A549 (cell line): ENCODE measurements at regions of chr17 and their contacts with region 1.

Region 1: GRCh38 chr17:32319548-32319905 is 22.4 kb downstream of the C17orf75 start:
- DNase-seq: peak; percentile 69 to 88
- ATAC-seq: peak; percentile 89 to 96
- H3K4me3 ChIP-seq: no peak overlapping the region
- H3K27ac ChIP-seq: no peak overlapping the region
- H3K4me1 ChIP-seq: no peaks in the 10 kb centered on the region
- CTCF ChIP-seq: peak; percentile 94
- EP300 ChIP-seq: no peak
- POLR2A ChIP-seq: no peak
- RAD21 ChIP-seq: peak; percentile 97 to 98

Region 2: DNA sequence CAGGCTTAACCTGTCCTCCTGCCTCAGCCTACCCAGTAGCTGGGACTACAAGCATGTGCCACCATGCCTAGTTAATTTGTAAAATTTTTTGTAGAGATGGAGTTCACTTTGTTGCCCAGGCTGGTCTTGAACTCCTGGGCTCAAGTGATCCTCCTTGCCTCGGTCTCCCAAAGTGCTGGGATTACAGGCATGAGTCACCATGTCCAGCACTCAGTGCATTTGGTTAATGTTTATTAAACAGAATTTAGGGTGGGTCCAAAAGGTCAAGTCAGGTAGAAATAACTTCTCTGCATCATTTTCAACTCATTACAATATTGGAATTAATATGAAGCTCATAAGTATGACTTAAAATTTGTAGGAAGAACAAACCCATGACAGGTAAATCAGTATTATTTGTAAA is 121.5 kb before region 1 on chr17:
- CTCF ChIA-PET with region 1: interaction called, 51 read pairs
- POLR2A ChIA-PET with region 1: no interaction called
- DNase-seq: no peak
- ATAC-seq: no peak
- H3K4me3 ChIP-seq: no peak overlapping the region
- H3K27ac ChIP-seq: peak overlapping the region in 1 of 2 experiments; percentile 28; a peak in 1 of 6 replicates
- H3K4me1 ChIP-seq: peaks cover 17% of the 10 kb centered on the region
- CTCF ChIP-seq: no peak
- EP300 ChIP-seq: no peak
- POLR2A ChIP-seq: no peak
- RAD21 ChIP-seq: no peak

Region 3: DNA sequence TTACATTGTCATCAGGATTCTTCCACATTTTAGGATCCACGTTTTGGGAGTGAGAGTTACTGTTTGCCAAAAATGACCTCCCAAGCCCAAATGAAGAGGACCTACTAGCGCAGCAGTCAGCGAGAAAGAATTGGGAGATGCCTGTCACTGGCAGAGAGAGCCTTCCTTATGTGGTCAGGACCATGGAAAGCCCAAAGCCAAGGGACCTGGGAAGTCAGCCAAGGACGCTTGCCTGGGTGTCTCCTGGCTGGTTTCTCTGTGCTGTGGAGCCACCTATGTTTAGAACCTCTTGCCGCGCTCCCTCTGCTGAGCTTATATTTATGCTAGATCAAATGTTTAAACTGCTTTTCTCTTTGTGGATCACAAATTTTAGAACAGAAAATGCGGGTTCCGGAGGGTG is 78.8 kb before region 1 on chr17:
- CTCF ChIA-PET with region 1: interaction called, 13 read pairs
- POLR2A ChIA-PET with region 1: no interaction called
- DNase-seq: no peak
- ATAC-seq: peak in 1 of 2 experiments; percentile 51; a peak in 2 of 6 replicates
- H3K4me3 ChIP-seq: no peak overlapping the region
- H3K27ac ChIP-seq: no peak overlapping the region
- H3K4me1 ChIP-seq: no peaks in the 10 kb centered on the region
- CTCF ChIP-seq: no peak
- EP300 ChIP-seq: no peak
- POLR2A ChIP-seq: no peak
- RAD21 ChIP-seq: no peak

Region 4: GRCh38 chr17:32271844-32272243 is 47.7 kb before region 1 on chr17:
- CTCF ChIA-PET with region 1: interaction called, 13 read pairs
- POLR2A ChIA-PET with region 1: no interaction called
- DNase-seq: no peak
- ATAC-seq: no peak
- H3K4me3 ChIP-seq: no peak overlapping the region
- H3K27ac ChIP-seq: peak overlapping the region in 1 of 2 experiments; percentile 54; a peak in 3 of 6 replicates
- H3K4me1 ChIP-seq: peaks cover 69% of the 10 kb centered on the region
- CTCF ChIP-seq: no peak
- EP300 ChIP-seq: no peak
- POLR2A ChIP-seq: no peak
- RAD21 ChIP-seq: no peak

Region 5: DNA sequence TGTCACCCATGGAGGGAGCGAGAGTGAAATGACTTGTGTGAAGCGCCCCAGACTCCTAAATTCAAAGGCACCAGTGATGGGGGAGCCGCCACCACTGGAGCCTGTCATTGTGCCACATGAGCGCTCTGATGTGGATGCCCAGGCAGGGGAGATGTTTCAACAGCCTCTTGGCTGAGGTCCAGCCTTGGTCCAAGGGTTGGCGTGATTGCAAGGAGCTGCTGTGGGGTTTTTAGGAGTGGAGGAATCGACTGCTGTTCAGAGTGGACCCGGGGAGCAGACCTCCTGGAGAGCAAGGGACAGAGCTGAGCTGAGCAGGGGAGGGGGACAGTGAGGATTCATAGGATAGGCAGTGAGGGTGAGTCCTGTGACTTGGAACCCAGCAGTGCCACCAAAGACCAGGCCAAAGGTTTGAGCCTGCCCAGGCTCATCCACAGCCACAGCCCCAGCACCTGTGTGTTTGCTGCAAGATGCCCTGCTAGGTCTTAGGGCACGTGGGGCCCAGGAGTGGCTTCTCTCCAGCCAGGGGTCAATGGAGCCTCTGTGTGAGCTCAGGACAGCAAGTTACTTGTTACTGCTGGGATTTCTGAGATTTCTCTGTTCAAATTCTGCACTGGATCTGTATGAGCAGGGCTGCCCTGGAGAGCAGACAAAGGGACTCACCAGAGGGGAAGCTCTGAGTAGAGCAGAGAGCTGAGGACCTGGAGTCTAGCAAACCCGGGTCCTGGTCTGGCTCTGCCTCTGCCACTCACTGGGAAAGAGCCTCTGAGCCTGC is 33.6 kb before region 1 on chr17:
- CTCF ChIA-PET with region 1: interaction called, 27 read pairs
- POLR2A ChIA-PET with region 1: no interaction called
- DNase-seq: no peak
- ATAC-seq: peak in 1 of 2 experiments; percentile 19; a peak in 2 of 6 replicates
- H3K4me3 ChIP-seq: no peak overlapping the region
- H3K27ac ChIP-seq: peak overlapping the region in 1 of 2 experiments; percentile 71; a peak in 3 of 6 replicates
- H3K4me1 ChIP-seq: peaks cover 23% of the 10 kb centered on the region; the same call in 2 of the 3 replicates
- CTCF ChIP-seq: no peak
- EP300 ChIP-seq: no peak
- POLR2A ChIP-seq: no peak
- RAD21 ChIP-seq: no peak

Region 6: DNA sequence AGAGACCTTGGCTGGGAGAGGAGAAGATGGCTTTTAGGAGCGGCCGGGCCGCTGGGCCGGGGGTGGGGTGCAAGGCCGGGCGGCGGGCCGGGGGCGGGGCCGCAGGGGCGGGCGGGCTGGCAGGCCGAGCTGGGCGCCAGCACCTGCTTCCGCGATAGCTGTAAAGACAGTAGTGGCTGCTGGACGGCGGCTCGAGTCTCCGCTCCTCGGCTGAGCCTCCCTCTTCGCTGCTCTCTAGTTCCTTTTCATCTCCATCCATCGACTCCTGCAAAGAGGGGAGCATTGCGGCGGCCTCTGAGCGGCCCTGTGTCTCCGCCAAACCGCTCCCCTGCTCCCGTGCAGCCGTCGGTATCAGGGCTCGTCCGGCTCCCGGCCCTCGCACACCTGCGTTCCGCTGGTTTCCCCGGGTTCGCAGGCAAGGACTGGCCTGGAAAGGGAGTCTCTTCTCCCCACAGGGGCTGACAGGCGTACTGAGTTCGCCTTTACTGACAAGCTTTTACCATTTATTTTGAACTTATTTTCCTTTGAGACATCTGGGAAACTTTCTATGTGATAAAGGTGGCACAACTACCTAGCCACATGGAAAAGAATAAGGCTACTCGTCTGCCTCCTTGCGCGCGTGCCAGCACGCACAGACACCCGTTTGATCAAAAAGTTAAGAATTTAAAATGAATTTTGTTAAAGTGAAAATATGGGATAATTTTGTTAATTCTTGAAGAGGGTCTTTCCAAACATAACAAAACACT is 22.5 kb after region 1 on chr17 and contains the start of gene C17orf75:
- CTCF ChIA-PET with region 1: interaction called, 10 read pairs
- POLR2A ChIA-PET with region 1: no interaction called
- DNase-seq: peak; percentile 69 to 90
- ATAC-seq: peak; percentile 95
- H3K4me3 ChIP-seq: peak within 1 kb of the TSS; percentile 69
- H3K27ac ChIP-seq: peak within 1 kb of the TSS; percentile 83 to 96
- H3K4me1 ChIP-seq: peaks cover 10% of the 10 kb centered on the region; the same call in 1 of the 3 replicates
- CTCF ChIP-seq: no peak
- EP300 ChIP-seq: no peak; a peak in 1 of 5 replicates
- POLR2A ChIP-seq: peak; percentile 71; the same call in 1 of the 2 replicates
- RAD21 ChIP-seq: no peak
- polyA plus RNA-seq, gene C17orf75: 36.9 and 49.6 TPM in 2 replicates